ENCODE measurements at regions of chr10 and their contacts with region 1.

Region 1: GRCh38 chr10:3067045-3067858 is at the start of gene PFKP:
- DNase-seq: peak in 1 of 2 donors; percentile 82
- H3K4me3 ChIP-seq: peak within 1 kb of the TSS; percentile 78 to 86
- H3K27ac ChIP-seq: peak within 1 kb of the TSS; percentile 83 to 90
- H3K4me1 ChIP-seq: peaks cover 0 to 38% (median 20%) of the 10 kb centered on the region in 4 donors
- H3K27me3 ChIP-seq: no peaks in the 10 kb centered on the region
- CTCF ChIP-seq: no peak

Region 2: GRCh38 chr10:2964632-2965296 is 102.5 kb before region 1 on chr10:
- intact Hi-C with region 1: no loop called
- DNase-seq: no peak
- H3K4me3 ChIP-seq: no peak overlapping the region
- H3K27ac ChIP-seq: no peak overlapping the region
- H3K4me1 ChIP-seq: no peaks in the 10 kb centered on the region
- H3K27me3 ChIP-seq: peaks cover 0 to 11% of the 10 kb centered on the region in 2 donors
- CTCF ChIP-seq: no peak

Region 3: DNA sequence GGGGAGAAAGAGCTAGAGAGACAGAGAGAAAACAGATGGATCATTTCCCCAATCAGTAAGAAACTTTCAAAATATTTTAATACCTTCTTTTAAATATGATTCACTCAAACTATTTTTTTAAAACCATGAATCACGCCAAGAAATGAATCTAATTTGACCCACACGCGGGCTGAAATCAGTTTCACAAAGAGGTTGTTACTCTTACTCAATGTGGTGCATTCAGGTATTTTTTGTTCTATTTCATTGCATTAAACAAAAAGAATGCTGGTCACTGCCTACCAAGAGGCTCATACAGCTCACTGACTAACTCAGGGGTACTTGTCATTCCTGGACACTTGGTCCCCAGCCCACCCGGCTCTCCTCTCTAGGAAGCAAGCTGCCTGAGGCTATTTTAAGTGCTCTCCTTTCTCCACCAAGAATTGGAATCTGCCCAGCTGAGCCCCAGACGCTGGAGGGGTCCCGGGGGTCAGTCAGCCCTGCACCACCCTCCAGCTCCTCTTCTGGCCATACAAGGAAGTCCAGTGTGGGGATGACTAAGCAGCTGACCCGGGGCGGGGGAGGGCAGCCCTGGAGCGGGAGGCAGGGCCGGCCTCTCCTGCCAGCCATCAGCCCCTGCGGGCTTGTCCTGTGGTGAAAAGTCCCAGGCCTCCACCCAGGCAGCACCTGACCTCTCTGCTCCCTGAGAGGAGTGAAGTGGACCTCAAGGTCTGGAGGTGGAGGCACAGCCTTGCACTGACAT is 21.6 kb before region 1 on chr10:
- intact Hi-C with region 1: loop called (anchors 1 kb)
- DNase-seq: peak; percentile 69 to 93
- H3K4me3 ChIP-seq: peak overlapping the region in 1 of 2 donors; percentile 5
- H3K27ac ChIP-seq: peak overlapping the region; percentile 81 to 88
- H3K4me1 ChIP-seq: peaks cover 0 to 50% (median 34%) of the 10 kb centered on the region in 4 donors
- H3K27me3 ChIP-seq: no peaks in the 10 kb centered on the region
- CTCF ChIP-seq: peak in 1 of 2 experiments; percentile 14

Region 4: DNA sequence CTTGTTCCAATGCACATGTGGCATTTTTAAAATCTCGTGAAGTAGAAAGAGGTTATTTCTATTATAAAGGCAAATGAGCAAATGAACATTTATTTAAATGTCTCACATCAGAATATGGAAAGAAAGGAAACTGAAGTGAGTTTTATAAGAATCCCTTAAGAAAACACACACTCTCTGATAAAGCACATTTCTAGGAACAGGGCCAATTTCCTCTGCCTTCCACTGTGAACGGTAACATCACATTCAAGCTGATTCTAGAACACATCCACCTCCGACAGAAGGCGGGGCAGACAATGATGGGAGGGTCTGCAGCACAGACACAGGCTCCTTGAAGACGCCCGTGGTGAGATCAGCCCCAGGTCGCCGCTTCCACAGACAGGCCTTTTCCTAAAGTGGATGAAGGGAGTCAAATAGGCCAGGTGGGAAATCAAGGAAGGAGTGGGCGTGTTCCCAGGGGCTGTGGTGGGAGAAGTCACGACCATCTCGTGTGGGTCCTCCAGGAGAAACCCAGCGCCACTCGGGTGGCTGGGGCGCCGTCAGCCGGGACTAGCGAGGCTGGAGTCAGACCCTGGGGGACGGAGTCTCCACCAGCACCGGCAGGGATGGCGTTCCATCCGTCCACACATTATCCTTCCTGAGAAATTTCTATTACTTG is 74.2 kb after region 1 on chr10:
- intact Hi-C with region 1: no loop called
- DNase-seq: no peak
- H3K4me3 ChIP-seq: no peak overlapping the region
- H3K27ac ChIP-seq: peak overlapping the region in 1 of 2 donors; percentile 52
- H3K4me1 ChIP-seq: peaks cover 0 to 24% (median 13%) of the 10 kb centered on the region in 4 donors
- H3K27me3 ChIP-seq: no peaks in the 10 kb centered on the region
- CTCF ChIP-seq: no peak

Region 5: GRCh38 chr10:3312403-3312802 is 245.2 kb after region 1 on chr10:
- intact Hi-C with region 1: no loop called
- DNase-seq: no peak
- H3K4me3 ChIP-seq: no peak overlapping the region
- H3K27ac ChIP-seq: no peak overlapping the region
- H3K4me1 ChIP-seq: no peaks in the 10 kb centered on the region
- H3K27me3 ChIP-seq: no peaks in the 10 kb centered on the region
- CTCF ChIP-seq: no peak

Measured in tibial artery (tissue), 4 donors.